Activated CD4-positive, alpha-beta T cell treated with anti-CD3 and anti-CD28 coated beads for 36 hours (primary cell): ENCODE measurements at regions of chr2 and their contacts with region 1.

Region 1: GRCh38 chr2:186503848-186504606 is 18.0 kb downstream of the ZC3H15 start:
- DNase-seq: no peak
- ATAC-seq: peak; percentile 44
- H3K4me3 Mint-ChIP-seq: no peak overlapping the region
- H3K27ac Mint-ChIP-seq: no peak overlapping the region
- H3K4me1 Mint-ChIP-seq: peaks cover 10% of the 10 kb centered on the region
- H3K27me3 Mint-ChIP-seq: no peaks in the 10 kb centered on the region

Region 2: GRCh38 chr2:186485871-186486650 is 18.0 kb before region 1 on chr2 and contains the start of gene ZC3H15:
- CTCF ChIA-PET with region 1: interaction called, 11 read pairs
- POLR2A ChIA-PET with region 1: interaction called, 3 read pairs
- intact Hi-C with region 1: no loop called
- DNase-seq: peak; percentile 98
- ATAC-seq: peak; percentile 93
- H3K4me3 Mint-ChIP-seq: peak within 1 kb of the TSS; percentile 99
- H3K27ac Mint-ChIP-seq: peak within 1 kb of the TSS; percentile 99
- H3K4me1 Mint-ChIP-seq: peaks cover 58% of the 10 kb centered on the region
- H3K27me3 Mint-ChIP-seq: no peaks in the 10 kb centered on the region
- total RNA-seq, gene ZC3H15: 100 to 115 TPM

Region 3: DNA sequence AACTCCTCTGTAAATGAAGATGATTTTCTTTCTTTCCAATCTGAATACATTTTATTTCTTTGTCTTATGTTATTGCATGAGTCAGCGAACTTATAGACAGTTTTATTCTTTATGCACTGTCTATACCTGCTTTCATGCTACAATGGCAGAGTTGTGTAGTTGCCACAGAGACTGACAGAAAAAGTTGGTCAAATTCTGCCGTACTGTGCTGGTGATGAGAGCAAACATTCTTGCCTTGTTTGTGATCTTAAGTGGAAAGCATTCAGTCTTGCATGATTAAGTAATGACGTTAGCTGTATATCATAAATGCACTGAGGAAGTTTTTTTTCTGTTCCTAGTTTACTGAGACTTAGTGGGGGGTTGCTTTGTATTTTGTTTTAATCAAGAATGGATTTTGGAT is 14.9 kb after region 1 on chr2:
- CTCF ChIA-PET with region 1: interaction called, 23 read pairs
- POLR2A ChIA-PET with region 1: no interaction called
- intact Hi-C with region 1: no loop called
- DNase-seq: no peak
- ATAC-seq: no peak
- H3K4me3 Mint-ChIP-seq: no peak overlapping the region
- H3K27ac Mint-ChIP-seq: no peak overlapping the region
- H3K4me1 Mint-ChIP-seq: no peaks in the 10 kb centered on the region
- H3K27me3 Mint-ChIP-seq: no peaks in the 10 kb centered on the region

Region 4: DNA sequence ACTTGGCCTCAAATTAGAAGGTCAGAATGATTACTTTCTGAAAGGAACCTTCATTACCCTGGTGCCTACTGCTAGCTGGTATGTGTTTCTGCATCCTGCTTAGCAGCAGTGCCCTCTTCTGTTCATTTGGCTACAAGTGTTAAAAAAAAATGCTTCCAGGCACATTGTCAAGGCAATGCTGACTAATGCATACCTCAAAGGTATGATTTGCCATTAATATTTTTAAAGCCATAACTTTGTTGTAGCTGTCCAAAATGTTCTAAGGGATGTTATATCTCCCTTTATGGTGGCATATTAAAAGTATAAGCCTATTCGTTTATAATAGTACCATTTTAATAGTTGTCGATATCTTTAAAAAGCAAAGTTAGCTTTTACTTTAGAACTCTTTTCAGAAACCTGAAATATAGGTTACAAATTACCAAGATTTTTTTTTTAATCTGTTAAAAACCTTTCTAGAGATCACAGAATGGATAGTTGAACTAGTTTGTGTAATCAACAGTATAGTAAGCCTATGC is 137.8 kb after region 1 on chr2:
- CTCF ChIA-PET with region 1: interaction called, 70 read pairs
- POLR2A ChIA-PET with region 1: no interaction called
- intact Hi-C with region 1: loop called (anchors 1 kb)
- DNase-seq: peak; percentile 49
- ATAC-seq: peak; percentile 71
- H3K4me3 Mint-ChIP-seq: no peak overlapping the region
- H3K27ac Mint-ChIP-seq: no peak overlapping the region
- H3K4me1 Mint-ChIP-seq: peaks cover 30% of the 10 kb centered on the region
- H3K27me3 Mint-ChIP-seq: no peaks in the 10 kb centered on the region

Region 5: GRCh38 chr2:186751790-186752189 is 247.8 kb after region 1 on chr2:
- CTCF ChIA-PET with region 1: no interaction called
- POLR2A ChIA-PET with region 1: no interaction called
- intact Hi-C with region 1: no loop called
- DNase-seq: no peak
- ATAC-seq: peak; percentile 70
- H3K4me3 Mint-ChIP-seq: no peak overlapping the region
- H3K27ac Mint-ChIP-seq: no peak overlapping the region
- H3K4me1 Mint-ChIP-seq: no peaks in the 10 kb centered on the region
- H3K27me3 Mint-ChIP-seq: no peaks in the 10 kb centered on the region

Region 6: GRCh38 chr2:186841940-186842339 is 337.9 kb after region 1 on chr2:
- CTCF ChIA-PET with region 1: no interaction called
- POLR2A ChIA-PET with region 1: no interaction called
- intact Hi-C with region 1: no loop called
- DNase-seq: no peak
- ATAC-seq: no peak
- H3K4me3 Mint-ChIP-seq: no peak overlapping the region
- H3K27ac Mint-ChIP-seq: no peak overlapping the region
- H3K4me1 Mint-ChIP-seq: no peaks in the 10 kb centered on the region
- H3K27me3 Mint-ChIP-seq: peaks cover 12% of the 10 kb centered on the region